ENCODE measurements at regions of chr10 and their contacts with region 1.

Region 1: GRCh38 chr10:34994565-34995142 is 95.5 kb downstream of the CUL2 start:
- DNase-seq: peak; percentile 26 to 73 (median 38)
- H3K4me3 ChIP-seq: no peak overlapping the region
- H3K4me3 Mint-ChIP-seq: peak overlapping the region in 2 of 8 donors; percentile 26 to 45
- H3K27ac ChIP-seq: no peak overlapping the region
- H3K27ac Mint-ChIP-seq: peak overlapping the region in 6 of 7 donors; percentile 21 to 75 (median 53)
- H3K4me1 ChIP-seq: peaks cover 8% of the 10 kb centered on the region
- H3K4me1 Mint-ChIP-seq: peaks cover 9 to 11% (median 10%) of the 10 kb centered on the region in 4 donors
- H3K27me3 ChIP-seq: no peaks in the 10 kb centered on the region
- H3K27me3 Mint-ChIP-seq: no peaks in the 10 kb centered on the region

Region 2: GRCh38 chr10:33542752-33543505 is 1451.7 kb before region 1 on chr10:
- CTCF ChIA-PET with region 1: no interaction called
- POLR2A ChIA-PET with region 1: no interaction called
- intact Hi-C with region 1: no loop called
- DNase-seq: no peak
- H3K4me3 ChIP-seq: no peak overlapping the region
- H3K4me3 Mint-ChIP-seq: no peak overlapping the region
- H3K27ac ChIP-seq: no peak overlapping the region
- H3K27ac Mint-ChIP-seq: peak overlapping the region in 1 of 7 donors; percentile 37
- H3K4me1 ChIP-seq: no peaks in the 10 kb centered on the region
- H3K4me1 Mint-ChIP-seq: no peaks in the 10 kb centered on the region
- H3K27me3 ChIP-seq: no peaks in the 10 kb centered on the region
- H3K27me3 Mint-ChIP-seq: peaks cover 16 to 21% of the 10 kb centered on the region in 2 donors

Region 3: DNA sequence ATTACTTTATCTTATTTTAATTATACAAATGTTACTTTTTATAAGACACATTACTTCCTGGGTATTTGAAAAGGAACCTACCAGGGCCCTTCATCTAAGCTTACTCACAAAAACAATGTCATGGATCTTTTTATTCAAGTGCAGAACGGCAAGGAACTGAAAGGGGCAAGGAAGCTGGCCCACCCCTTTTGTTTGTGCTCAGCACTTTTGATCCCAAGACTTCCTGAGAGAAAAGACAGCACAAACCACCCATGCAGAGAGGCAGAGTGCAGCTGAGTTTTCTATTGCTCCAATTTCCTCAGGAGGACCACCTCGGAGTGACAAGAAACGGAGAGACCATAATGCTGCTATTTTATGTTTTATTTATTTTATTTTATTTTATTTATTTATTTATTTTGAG is 1428.2 kb before region 1 on chr10:
- CTCF ChIA-PET with region 1: no interaction called
- POLR2A ChIA-PET with region 1: no interaction called
- intact Hi-C with region 1: no loop called
- DNase-seq: no peak
- H3K4me3 ChIP-seq: no peak overlapping the region
- H3K4me3 Mint-ChIP-seq: no peak overlapping the region
- H3K27ac ChIP-seq: no peak overlapping the region
- H3K27ac Mint-ChIP-seq: no peak overlapping the region
- H3K4me1 ChIP-seq: no peaks in the 10 kb centered on the region
- H3K4me1 Mint-ChIP-seq: no peaks in the 10 kb centered on the region
- H3K27me3 ChIP-seq: peaks cover 4% of the 10 kb centered on the region
- H3K27me3 Mint-ChIP-seq: peaks cover 4 to 16% of the 10 kb centered on the region in 2 donors

Region 4: DNA sequence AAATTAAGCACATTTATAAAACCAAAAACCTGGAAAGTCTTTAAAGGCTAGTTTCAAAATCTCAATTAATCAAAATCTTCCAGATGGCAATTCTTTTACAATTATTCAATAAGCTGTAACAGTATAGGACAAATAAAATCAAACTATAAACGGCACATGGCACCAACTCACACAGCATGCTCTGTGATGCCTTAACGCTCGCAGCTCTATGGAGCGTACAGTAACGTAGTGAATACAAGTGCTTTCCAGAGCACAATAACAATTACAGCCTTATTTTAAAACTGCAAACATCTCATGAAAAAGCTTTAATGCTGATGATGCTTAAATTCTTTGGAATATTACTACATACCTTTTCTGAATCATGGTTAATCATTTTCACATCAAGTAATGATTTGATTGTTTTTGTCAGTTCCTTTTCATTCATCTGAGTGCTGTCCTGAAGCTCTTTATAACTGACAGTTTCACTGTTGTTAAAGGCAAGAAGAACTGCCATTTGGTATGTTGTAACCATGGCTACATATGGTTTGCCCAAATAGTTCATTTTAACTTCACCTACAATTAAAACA is 21.3 kb after region 1 on chr10:
- CTCF ChIA-PET with region 1: interaction called, 6 read pairs
- POLR2A ChIA-PET with region 1: no interaction called
- intact Hi-C with region 1: loop called (anchors 1 kb)
- DNase-seq: no peak
- H3K4me3 ChIP-seq: no peak overlapping the region
- H3K4me3 Mint-ChIP-seq: no peak overlapping the region
- H3K27ac ChIP-seq: no peak overlapping the region
- H3K27ac Mint-ChIP-seq: no peak overlapping the region
- H3K4me1 ChIP-seq: peaks cover 10% of the 10 kb centered on the region
- H3K4me1 Mint-ChIP-seq: peaks cover 12 to 15% (median 14%) of the 10 kb centered on the region in 4 donors
- H3K27me3 ChIP-seq: no peaks in the 10 kb centered on the region
- H3K27me3 Mint-ChIP-seq: no peaks in the 10 kb centered on the region

Region 5: DNA sequence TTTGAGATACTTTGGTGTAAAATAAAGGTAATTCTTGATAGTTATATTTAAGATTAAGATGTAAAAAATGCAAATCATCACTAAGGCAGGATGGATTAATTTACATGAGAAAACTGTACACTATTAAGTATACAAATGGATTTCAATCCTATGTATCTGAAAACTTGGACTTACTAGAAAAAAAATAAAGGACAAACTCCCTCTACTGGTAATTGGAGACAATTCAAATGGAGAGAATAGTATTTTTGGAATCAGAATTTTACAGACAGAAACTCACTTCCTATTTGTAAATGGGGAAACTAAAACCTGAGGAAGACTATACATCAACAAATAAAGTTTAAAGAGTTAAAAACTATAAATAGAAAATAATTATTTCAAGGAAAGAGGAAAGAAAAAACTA is 32.9 kb after region 1 on chr10:
- CTCF ChIA-PET with region 1: interaction called, 44 read pairs
- POLR2A ChIA-PET with region 1: no interaction called
- intact Hi-C with region 1: loop called (anchors 1 kb)
- DNase-seq: no peak
- H3K4me3 ChIP-seq: no peak overlapping the region
- H3K4me3 Mint-ChIP-seq: no peak overlapping the region
- H3K27ac ChIP-seq: no peak overlapping the region
- H3K27ac Mint-ChIP-seq: no peak overlapping the region
- H3K4me1 ChIP-seq: no peaks in the 10 kb centered on the region
- H3K4me1 Mint-ChIP-seq: peaks cover 0 to 2% (median under 1%) of the 10 kb centered on the region in 4 donors
- H3K27me3 ChIP-seq: no peaks in the 10 kb centered on the region
- H3K27me3 Mint-ChIP-seq: no peaks in the 10 kb centered on the region

Region 6: GRCh38 chr10:35218339-35218955 is 223.8 kb after region 1 on chr10:
- CTCF ChIA-PET with region 1: interaction called, 57 read pairs
- POLR2A ChIA-PET with region 1: no interaction called
- intact Hi-C with region 1: loop called (anchors 1 kb)
- DNase-seq: peak; percentile 78 to 85 (median 79)
- H3K4me3 ChIP-seq: no peak overlapping the region
- H3K4me3 Mint-ChIP-seq: peak overlapping the region in 6 of 8 donors; percentile 41 to 73 (median 69)
- H3K27ac ChIP-seq: no peak overlapping the region
- H3K27ac Mint-ChIP-seq: peak overlapping the region; percentile 7 to 94 (median 92)
- H3K4me1 ChIP-seq: peaks cover 9% of the 10 kb centered on the region
- H3K4me1 Mint-ChIP-seq: peaks cover 6 to 8% (median 7%) of the 10 kb centered on the region in 4 donors
- H3K27me3 ChIP-seq: no peaks in the 10 kb centered on the region
- H3K27me3 Mint-ChIP-seq: peaks cover 0 to 16% of the 10 kb centered on the region in 2 donors

Measured in CD4-positive, alpha-beta memory T cell (primary cell).